ENCODE measurements at regions of chr6 and their contacts with region 1.

Region 1: DNA sequence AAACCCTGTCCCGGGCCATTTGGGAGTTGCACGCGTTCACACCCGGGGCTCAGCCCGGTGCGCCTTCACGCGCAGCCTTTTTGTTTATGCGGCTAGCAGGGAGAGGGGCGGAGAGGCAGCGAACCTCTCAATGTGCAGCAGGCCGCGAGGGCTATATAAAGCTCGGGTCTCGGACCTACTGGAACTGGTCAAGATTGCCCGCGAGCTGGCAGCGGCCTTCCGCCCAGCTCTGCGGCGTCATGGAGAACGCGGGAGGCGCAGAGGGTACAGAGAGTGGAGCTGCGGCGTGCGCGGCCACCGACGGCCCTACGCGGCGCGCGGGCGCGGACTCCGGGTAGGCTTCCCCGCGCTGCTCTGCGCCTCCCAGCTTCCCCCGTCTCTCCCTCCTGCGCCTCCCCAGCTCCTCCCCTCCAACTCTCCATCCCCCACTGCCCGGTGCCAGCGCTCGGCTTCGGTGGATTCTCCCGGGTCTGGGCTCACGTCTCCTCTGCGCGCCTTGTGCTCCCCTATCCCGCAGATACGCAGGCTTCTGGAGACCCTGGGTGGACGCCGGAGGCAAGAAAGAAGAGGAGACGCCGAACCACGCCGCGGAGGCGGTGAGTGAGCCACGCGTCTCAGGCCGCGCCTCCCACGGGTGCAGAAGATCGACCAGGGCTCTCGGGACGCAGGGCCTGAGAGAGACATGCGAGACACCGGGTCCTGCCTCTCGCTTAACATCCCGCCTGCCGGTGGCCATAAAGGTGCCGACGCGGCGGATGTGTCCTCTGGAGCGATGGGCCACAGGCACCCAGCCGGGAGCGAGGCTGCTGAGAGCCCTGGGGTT is at the start of gene RIPPLY2:
- DNase-seq: peak; percentile 39 to 93 (median 83)

Region 2: DNA sequence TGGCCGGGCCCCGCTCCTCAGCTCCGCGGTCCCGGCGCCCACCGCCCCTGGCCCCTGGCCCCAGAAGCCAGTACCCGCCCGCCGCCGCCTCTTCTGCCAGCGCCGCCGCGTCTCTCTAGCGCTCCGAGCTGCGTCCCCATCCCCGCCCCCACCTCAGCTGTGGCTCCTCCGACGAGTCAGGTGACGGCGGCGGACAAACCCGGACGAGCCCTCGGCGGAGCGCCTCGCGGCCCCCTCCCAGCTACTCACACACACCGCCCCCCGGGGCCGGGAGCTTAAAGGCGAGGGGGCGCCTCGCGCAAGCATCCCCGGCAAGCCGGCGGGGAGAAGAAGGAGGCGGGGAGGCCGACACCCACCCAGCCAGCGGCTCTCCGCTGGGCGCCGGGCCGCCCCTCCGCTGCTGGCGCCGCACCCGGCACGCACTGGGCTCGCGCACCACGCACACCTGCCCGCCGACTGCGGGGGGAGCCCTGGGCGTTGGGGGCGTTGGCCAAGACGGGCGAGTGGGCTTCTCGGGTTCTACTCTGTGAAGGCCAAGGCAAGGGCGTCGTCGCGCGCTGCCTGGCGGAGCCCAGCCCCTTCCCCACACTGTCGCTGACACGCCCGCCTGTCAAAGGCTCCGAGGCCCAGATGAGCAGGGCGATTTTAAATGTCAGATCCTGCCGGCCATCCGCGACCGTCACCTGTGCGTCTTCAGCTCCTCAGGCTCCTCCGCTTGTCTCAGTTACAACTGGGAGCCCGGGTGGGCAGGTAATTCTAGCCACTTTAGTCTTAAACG is 144.2 kb before region 1 on chr6 and contains the start of gene SNAP91:
- intact Hi-C with region 1: loop called (anchors 2 kb)
- DNase-seq: peak; percentile 44 to 94 (median 84)

Region 3: GRCh38 chr6:84177241-84177640 is 323.9 kb after region 1 on chr6:
- intact Hi-C with region 1: no loop called
- DNase-seq: no peak